ENCODE measurements at regions of chr15 and their contacts with region 1.

Region 1: DNA sequence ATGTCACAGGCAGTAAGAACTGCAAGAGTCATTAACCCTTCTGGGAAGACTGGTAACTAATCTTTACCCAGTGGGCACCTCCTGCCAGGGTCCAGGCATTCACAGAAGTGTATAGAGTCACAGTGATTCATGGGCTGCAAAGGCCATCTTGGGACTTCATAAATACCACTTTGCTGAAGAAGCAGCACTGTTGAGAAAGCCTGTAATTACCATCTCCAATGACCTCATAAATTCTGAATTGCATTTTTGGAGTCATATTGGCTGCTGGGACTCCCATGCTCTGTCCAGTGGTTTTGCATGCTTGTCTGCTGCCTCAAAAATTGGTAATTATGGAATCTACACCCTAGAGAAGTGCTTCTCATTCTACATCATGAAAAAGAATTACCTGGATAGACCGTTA is 837.2 kb downstream of the NTRK3 start:
- DNase-seq: no peak
- H3K4me3 ChIP-seq: no peak overlapping the region
- H3K27ac ChIP-seq: no peak overlapping the region
- H3K4me1 ChIP-seq: no peaks in the 10 kb centered on the region
- H3K27me3 ChIP-seq: no peaks in the 10 kb centered on the region
- CTCF ChIP-seq: no peak

Region 2: DNA sequence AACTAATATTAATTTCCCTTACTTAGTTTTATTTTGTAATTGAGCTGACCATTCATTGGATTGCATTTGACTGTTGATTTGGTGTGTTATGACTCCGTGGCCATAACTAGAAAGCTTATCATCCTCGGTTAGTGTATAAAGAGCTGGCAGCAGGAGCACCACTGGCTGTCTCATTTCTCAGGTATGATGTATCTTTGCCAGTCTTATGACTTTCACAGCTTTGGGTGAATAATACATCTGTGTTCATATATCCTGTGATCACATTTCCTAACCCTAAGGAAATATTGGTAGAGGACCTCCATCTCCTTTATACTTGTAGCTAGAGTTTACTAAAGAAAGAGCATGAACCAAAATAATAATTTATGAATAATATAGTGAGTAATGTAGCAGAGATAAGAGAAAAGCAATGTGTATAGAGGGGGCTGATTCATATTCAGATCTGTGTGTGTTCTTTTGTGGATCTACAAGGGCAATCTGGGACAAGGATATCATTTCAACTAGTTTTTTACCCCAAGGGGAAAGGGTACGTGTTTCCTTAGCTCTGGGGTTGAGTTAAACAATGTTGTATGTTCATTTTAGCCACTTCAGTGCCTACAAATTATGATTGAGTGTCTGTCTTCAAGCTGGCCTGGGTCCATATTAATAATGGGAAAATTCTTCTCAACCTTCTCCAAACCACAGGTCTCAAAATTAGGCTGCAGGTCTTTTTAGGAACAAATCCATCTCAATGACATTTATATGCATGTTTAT is 64.5 kb before region 1 on chr15:
- intact Hi-C with region 1: loop called (anchors 10 kb)
- DNase-seq: no peak
- H3K4me3 ChIP-seq: no peak overlapping the region
- H3K27ac ChIP-seq: no peak overlapping the region
- H3K4me1 ChIP-seq: no peaks in the 10 kb centered on the region
- H3K27me3 ChIP-seq: no peaks in the 10 kb centered on the region
- CTCF ChIP-seq: no peak